ENCODE measurements at regions of chr6 and their contacts with region 1.

Region 1: GRCh38 chr6:305371-306206 is 13.3 kb downstream of the DUSP22 start:
- DNase-seq: peak; percentile 74
- H3K4me3 ChIP-seq: peak overlapping the region; percentile 2
- H3K27ac ChIP-seq: peak overlapping the region; percentile 71
- H3K4me1 ChIP-seq: peaks cover 62% of the 10 kb centered on the region
- CTCF ChIP-seq: no peak

Region 2: DNA sequence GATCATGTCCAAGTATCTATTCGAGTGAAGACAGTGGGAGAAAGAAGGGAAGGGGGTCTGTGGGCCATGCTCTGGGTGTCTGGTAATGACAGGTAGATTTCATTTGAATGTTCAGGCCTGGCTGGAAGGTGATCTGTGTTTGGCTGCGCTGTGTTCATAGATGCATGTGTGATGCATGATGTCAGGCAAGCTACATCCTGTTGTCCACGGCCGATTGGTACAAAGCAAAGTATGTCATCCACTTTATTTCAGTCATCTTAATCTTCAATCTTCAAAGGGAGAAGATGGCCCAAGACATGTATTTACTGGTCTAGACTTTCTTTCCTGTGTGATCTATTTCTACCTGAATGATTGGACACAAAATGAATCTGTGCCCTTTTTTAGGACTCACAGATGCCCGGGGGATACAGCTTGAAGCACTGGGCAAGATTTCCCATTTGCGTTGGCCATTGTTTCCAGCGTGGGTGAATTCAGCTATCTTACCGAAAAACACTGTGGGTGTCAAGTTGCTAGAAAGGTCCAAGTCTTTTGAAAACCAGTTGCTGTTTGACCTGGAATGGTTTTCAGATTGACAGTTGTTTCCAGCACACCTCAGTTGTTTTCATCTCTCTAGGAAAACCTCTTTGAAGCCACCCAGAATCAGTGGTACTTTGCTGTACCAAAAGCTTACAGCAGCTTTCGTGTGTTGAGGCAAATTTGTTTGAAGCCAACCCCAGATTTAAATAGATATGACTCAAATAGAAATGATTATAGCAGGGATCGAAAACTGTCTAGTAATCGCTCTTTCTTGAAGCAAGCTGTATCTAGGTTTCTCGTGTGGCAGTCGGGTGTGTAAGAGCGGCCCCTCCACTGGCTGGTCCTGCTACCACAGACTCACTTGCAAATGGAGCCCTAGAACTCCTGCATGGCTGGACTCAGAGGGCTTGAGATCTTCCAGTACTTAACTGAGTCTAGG is 13.9 kb after region 1 on chr6:
- CTCF ChIA-PET with region 1: interaction called, 11 read pairs
- POLR2A ChIA-PET with region 1: interaction called, 180 read pairs
- intact Hi-C with region 1: loop called (anchors 1 kb)
- DNase-seq: no peak
- H3K4me3 ChIP-seq: no peak overlapping the region
- H3K27ac ChIP-seq: no peak overlapping the region
- H3K4me1 ChIP-seq: peaks cover 100% of the 10 kb centered on the region
- CTCF ChIP-seq: no peak

Measured in OCI-LY7 (cell line).